Activated B cell treated with CpG ODN at 0.5 μM for 24 hours (primary cell): ENCODE measurements at regions of chr12 and their contacts with region 1.

Region 1: GRCh38 chr12:121209624-121210572 is at the start of gene P2RX4:
- DNase-seq: peak; percentile 80
- ATAC-seq: peak; percentile 85
- H3K4me3 Mint-ChIP-seq: peak within 1 kb of the TSS; percentile 83
- H3K27ac Mint-ChIP-seq: peak within 1 kb of the TSS; percentile 85
- H3K4me1 Mint-ChIP-seq: peaks cover 24% of the 10 kb centered on the region
- H3K27me3 Mint-ChIP-seq: no peaks in the 10 kb centered on the region
- CTCF ChIP-seq: no peak
- total RNA-seq, gene P2RX4: 17.0 and 19.5 TPM in 2 replicates

Region 2: DNA sequence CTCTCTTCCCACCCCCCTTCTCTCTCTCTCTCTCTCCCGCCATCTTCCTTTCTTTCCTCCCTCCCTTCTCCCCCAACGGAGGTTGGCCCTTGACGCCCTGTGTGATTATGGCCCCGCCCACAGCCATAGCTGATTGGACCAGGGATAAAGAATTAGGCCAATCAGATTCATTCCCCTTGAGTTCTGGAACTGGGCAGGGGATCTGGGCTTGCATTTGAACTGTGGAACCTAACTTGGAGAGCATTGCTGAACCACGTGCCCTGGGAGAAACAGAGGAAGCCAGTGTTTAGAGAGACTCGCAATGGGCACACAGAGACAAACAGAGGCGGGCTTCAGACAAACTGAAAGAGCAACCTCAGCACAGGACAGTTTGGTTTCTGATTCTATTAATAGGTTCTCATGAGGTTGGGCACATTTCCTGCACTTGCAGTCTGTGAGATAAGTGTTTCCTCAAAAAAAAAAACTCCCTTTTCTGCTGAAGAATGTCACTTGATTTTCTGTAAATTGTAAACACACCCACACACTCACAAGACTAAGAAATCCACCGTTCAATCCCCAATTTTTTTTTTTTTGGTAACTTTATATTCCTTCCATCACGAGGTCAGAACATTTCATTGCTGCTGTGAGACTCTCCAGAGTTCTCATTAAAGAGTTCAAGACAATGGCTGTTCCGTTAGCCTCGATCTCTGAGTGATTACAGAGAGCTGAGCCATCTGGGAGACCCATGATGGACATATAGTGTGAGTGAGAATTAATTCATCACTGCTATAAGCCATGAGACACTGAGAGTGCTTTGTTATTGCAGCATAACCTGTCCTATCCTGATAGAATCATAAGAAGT is 80.7 kb before region 1 on chr12:
- CTCF ChIA-PET with region 1: no interaction called
- POLR2A ChIA-PET with region 1: interaction called, 4 read pairs
- intact Hi-C with region 1: loop called (anchors 1 kb)
- DNase-seq: peak; percentile 65
- ATAC-seq: peak; percentile 87
- H3K4me3 Mint-ChIP-seq: peak overlapping the region; percentile 87
- H3K27ac Mint-ChIP-seq: peak overlapping the region; percentile 99
- H3K4me1 Mint-ChIP-seq: peaks cover 68% of the 10 kb centered on the region
- H3K27me3 Mint-ChIP-seq: no peaks in the 10 kb centered on the region
- CTCF ChIP-seq: no peak

Region 3: DNA sequence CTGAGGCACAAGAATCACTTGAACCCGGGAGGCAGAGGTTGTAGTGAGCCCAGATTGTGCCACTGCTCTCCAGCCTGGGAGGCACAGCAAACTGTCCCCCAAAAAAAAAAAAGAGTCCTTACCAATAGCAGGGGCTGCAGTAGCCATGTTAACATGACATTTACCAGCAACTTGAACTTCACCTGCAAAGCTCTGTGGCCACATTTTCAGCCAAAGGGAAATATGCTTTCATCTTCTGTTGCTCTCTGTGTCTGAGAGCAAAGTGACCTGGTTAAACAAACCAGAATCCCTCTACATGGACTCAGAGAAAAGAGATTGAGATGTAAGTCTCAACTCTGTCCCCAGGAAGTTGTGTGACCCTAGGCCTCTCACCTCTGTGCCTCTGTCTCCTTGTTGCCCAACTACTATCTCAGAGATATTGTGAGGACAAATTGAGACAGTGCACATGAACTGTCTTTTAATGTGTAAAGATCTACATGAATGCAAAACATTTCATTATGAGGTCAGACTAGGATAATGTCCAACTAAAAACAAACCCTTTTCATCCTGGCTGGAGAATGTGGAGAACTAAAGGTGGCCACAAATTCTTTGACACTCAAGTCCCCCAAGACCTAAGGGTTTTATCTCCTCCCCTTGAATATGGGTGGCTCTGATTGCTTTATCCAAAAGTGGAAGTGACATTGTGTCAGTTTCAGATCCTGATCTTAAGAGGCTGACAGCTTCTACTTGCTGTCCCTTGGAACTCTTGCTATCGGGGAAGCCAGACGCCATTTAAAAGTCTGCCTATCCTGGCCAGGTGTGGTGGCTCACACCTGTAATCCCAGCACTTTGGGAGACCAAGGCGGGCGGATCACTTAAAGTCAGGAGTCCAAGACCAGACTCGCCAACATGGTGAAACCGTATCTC is 24.7 kb before region 1 on chr12:
- CTCF ChIA-PET with region 1: no interaction called
- POLR2A ChIA-PET with region 1: interaction called, 11 read pairs
- intact Hi-C with region 1: no loop called
- DNase-seq: no peak
- ATAC-seq: peak; percentile 84
- H3K4me3 Mint-ChIP-seq: no peak overlapping the region
- H3K27ac Mint-ChIP-seq: peak overlapping the region; percentile 70
- H3K4me1 Mint-ChIP-seq: peaks cover 16% of the 10 kb centered on the region
- H3K27me3 Mint-ChIP-seq: no peaks in the 10 kb centered on the region
- CTCF ChIP-seq: no peak

Region 4: DNA sequence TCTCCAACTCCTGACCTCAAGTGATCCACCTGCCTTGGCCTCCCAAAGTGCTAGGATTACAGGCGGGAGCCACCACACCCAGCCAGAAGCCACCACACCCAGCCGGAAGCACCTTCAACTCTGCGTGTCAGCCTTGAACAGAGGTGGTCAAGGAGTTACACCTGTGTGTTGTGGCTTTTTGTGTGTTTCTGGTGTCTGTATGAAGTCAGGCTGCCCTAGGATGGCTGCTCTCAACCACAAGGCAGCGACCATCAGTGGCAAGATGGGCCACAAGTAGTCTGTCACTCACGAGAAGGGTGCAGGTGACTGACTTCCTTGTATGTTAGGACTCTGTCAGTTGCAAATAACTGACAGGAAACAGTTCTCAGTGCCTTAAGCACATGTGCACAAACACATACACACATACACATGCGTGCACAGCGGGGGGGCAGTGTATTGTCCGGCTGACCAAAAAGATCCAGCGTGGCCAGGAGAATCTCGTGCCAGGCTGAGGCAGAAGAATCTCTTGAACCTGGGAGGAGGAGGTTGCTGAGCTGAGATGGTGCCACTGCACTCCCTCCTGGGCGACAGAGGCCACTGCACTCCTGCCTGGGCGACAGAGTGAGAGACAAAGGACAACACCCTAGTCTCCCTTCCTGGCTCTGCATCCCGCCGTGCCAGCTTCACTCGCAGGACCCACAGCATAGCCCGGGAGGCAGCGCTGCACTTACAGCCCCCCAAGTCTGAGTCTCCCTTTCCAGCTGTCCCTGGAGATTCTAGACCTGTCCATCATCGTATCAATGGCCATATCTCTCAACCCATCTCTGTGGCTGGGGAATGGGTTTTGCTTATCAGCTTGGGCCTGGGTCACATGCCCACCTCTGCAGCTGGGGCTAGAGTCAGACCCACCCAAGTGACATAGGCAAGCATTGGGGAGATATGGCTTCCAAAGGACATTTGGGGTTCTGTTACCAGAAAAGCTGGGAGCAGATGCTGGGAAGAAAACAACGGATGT is 13.7 kb after region 1 on chr12:
- CTCF ChIA-PET with region 1: no interaction called
- POLR2A ChIA-PET with region 1: interaction called, 7 read pairs
- intact Hi-C with region 1: loop called (anchors 2 kb)
- DNase-seq: no peak
- ATAC-seq: peak; percentile 39
- H3K4me3 Mint-ChIP-seq: no peak overlapping the region
- H3K27ac Mint-ChIP-seq: peak overlapping the region; percentile 83
- H3K4me1 Mint-ChIP-seq: peaks cover 34% of the 10 kb centered on the region
- H3K27me3 Mint-ChIP-seq: no peaks in the 10 kb centered on the region
- CTCF ChIP-seq: no peak

Region 5: GRCh38 chr12:121296618-121297434 is 86.9 kb after region 1 on chr12 and contains the start of gene CAMKK2:
- CTCF ChIA-PET with region 1: no interaction called
- POLR2A ChIA-PET with region 1: no interaction called
- intact Hi-C with region 1: loop called (anchors 5 kb)
- DNase-seq: peak; percentile 94
- ATAC-seq: peak; percentile 87
- H3K4me3 Mint-ChIP-seq: peak within 1 kb of the TSS; percentile 87
- H3K27ac Mint-ChIP-seq: peak within 1 kb of the TSS; percentile 73
- H3K4me1 Mint-ChIP-seq: peaks cover 21% of the 10 kb centered on the region
- H3K27me3 Mint-ChIP-seq: no peaks in the 10 kb centered on the region
- CTCF ChIP-seq: no peak
- total RNA-seq, gene CAMKK2: 19.3 and 20.5 TPM in 2 replicates